Activated B cell treated with CpG ODN at 0.5 μM for 24 hours (primary cell): ENCODE measurements at regions of chr9 and their contacts with region 1.

Region 1: GRCh38 chr9:3732077-3733038 is 206.6 kb upstream of the RFX3 start:
- DNase-seq: no peak
- ATAC-seq: peak; percentile 79
- H3K4me3 Mint-ChIP-seq: peak overlapping the region; percentile 25
- H3K27ac Mint-ChIP-seq: no peak overlapping the region
- H3K4me1 Mint-ChIP-seq: peaks cover 7% of the 10 kb centered on the region
- H3K27me3 Mint-ChIP-seq: no peaks in the 10 kb centered on the region
- CTCF ChIP-seq: no peak

Region 2: GRCh38 chr9:3719286-3719685 is 13.1 kb before region 1 on chr9:
- CTCF ChIA-PET with region 1: no interaction called
- POLR2A ChIA-PET with region 1: no interaction called
- intact Hi-C with region 1: no loop called
- DNase-seq: no peak
- ATAC-seq: no peak
- H3K4me3 Mint-ChIP-seq: no peak overlapping the region
- H3K27ac Mint-ChIP-seq: no peak overlapping the region
- H3K4me1 Mint-ChIP-seq: no peaks in the 10 kb centered on the region
- H3K27me3 Mint-ChIP-seq: peaks cover 5% of the 10 kb centered on the region
- CTCF ChIP-seq: no peak

Region 3: DNA sequence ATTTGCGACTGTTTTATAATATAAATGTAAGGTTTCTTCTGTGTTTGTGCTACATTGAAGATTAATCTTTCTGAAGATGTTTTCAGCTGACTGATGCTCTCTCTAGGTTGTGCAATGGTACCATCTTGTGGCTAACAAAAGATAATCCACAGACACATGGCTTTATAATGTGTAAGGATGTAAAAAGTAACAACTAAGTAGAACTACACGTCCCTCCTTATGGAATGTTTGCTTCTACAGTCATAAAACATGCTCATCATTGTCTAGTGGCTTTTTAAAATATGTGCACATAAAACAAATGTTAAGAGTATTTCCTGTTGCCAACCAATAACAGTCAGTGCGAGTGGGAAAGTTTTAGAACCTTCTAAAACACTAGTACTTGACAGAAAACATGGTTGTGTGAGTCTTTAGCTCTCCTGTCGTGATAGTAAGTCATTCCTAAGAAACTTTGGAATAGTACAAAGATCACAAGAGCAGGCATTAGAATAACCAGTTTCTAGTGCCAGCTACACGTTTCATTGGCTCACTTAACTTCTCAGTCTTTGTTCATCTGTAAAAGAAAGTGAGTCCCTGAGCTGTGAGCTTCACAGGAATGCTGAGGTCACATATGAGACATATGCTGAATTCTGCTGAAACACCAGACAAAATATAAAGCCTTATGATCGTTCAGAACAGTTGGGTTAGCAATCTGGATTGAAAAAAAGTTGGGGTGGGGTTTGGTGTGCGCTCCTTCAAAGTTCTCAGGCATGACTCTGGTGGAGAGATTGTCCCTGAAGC is 643.3 kb after region 1 on chr9:
- CTCF ChIA-PET with region 1: no interaction called
- POLR2A ChIA-PET with region 1: no interaction called
- intact Hi-C with region 1: loop called (anchors 2 kb)
- DNase-seq: no peak
- ATAC-seq: no peak
- H3K4me3 Mint-ChIP-seq: no peak overlapping the region
- H3K27ac Mint-ChIP-seq: no peak overlapping the region
- H3K4me1 Mint-ChIP-seq: no peaks in the 10 kb centered on the region
- H3K27me3 Mint-ChIP-seq: peaks cover 13% of the 10 kb centered on the region
- CTCF ChIP-seq: no peak